ENCODE measurements at regions of chr20 and their contacts with region 1.

Region 1: GRCh38 chr20:19661717-19662636 is 96.1 kb upstream of the RIN2 start:
- DNase-seq: peak; percentile 77
- ATAC-seq: peak; percentile 56
- H3K4me3 ChIP-seq: no peak overlapping the region
- H3K4me3 Mint-ChIP-seq: no peak overlapping the region
- H3K27ac ChIP-seq: no peak overlapping the region
- H3K27ac Mint-ChIP-seq: no peak overlapping the region
- H3K4me1 ChIP-seq: peaks cover 19 to 24% of the 10 kb centered on the region in 2 donors
- H3K4me1 Mint-ChIP-seq: peaks cover 29% of the 10 kb centered on the region
- H3K27me3 ChIP-seq: peaks cover 0 to 16% (median 6%) of the 10 kb centered on the region in 4 experiments
- H3K27me3 Mint-ChIP-seq: peaks cover 32% of the 10 kb centered on the region
- CTCF ChIP-seq: peak; percentile 99

Region 2: DNA sequence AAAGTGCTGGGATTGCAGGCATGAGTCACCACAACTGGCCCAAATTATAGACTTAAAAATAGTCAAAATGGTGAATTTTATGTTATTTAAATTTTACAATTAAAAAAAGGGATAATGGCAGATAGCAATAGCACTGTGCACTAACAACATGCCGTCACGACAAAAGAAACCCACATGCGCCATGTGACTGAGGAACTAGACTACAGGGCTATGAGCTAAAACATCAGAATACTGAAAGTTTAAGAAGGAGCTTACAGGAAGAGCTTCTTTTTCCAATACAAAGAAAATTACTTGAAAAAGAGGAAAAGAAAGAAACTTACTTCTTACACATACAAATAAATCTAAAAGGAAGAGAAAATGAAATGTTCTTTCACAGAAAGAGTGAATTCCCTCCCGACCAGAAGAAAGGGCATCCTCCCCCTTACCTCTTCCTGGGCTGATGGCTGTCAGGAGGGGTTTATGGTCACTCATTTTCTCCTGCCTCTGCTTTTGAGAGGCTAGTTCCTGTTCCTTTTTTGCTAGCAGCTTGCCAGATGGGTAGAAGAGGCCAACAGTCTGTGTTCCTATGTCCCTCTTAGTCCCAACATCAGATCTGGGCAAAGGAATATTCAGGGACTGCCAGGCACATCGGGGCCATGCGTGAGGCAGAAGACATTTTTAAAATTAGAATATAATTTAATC is 1249.6 kb before region 1 on chr20:
- CTCF ChIA-PET with region 1: interaction called, 6 read pairs
- POLR2A ChIA-PET with region 1: no interaction called
- intact Hi-C with region 1: loop called (anchors 1 kb)
- DNase-seq: peak; percentile 52
- ATAC-seq: peak; percentile 20
- H3K4me3 ChIP-seq: peak overlapping the region in 1 of 5 experiments; percentile 25
- H3K4me3 Mint-ChIP-seq: peak overlapping the region; percentile 63
- H3K27ac ChIP-seq: peak overlapping the region; percentile 65 to 70
- H3K27ac Mint-ChIP-seq: peak overlapping the region; percentile 70
- H3K4me1 ChIP-seq: peaks cover 7 to 15% of the 10 kb centered on the region in 2 donors
- H3K4me1 Mint-ChIP-seq: peaks cover 11% of the 10 kb centered on the region
- H3K27me3 ChIP-seq: no peaks in the 10 kb centered on the region
- H3K27me3 Mint-ChIP-seq: no peaks in the 10 kb centered on the region
- CTCF ChIP-seq: no peak

Region 3: DNA sequence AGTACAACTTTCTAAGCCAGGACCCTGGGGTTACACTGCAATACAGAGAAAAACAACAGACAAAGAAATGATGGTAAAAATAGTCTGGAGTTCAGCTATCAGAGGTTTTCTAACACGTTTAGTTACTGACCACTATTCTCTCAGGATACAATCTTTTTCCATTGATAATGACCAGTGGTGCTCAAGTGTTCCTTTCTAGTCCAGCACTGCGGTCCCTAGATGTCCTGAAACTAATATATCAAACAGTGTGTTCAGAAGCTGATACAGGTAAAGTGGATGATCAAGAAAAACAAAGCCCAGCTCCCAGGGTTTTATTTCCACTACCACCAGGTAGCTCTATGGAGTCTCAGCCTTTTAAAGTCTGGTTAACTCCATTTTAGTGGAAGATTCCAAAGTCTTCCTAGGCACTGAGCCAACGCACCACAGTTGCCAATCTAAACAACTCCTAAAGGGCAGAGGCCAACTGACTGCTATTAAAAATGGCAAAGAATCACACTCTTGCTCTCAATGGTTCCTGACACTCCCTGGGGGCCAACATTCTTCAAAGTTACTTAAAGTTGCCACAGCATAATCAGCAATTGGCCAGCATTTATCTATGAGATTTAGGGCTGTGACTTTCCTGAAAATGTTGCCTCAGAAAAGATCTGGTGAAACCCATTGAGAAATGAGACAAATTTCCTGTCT is 1233.3 kb before region 1 on chr20:
- CTCF ChIA-PET with region 1: no interaction called
- POLR2A ChIA-PET with region 1: no interaction called
- intact Hi-C with region 1: no loop called
- DNase-seq: no peak
- ATAC-seq: no peak
- H3K4me3 ChIP-seq: no peak overlapping the region
- H3K4me3 Mint-ChIP-seq: no peak overlapping the region
- H3K27ac ChIP-seq: no peak overlapping the region
- H3K27ac Mint-ChIP-seq: no peak overlapping the region
- H3K4me1 ChIP-seq: no peaks in the 10 kb centered on the region
- H3K4me1 Mint-ChIP-seq: no peaks in the 10 kb centered on the region
- H3K27me3 ChIP-seq: no peaks in the 10 kb centered on the region
- H3K27me3 Mint-ChIP-seq: no peaks in the 10 kb centered on the region
- CTCF ChIP-seq: no peak

Region 4: DNA sequence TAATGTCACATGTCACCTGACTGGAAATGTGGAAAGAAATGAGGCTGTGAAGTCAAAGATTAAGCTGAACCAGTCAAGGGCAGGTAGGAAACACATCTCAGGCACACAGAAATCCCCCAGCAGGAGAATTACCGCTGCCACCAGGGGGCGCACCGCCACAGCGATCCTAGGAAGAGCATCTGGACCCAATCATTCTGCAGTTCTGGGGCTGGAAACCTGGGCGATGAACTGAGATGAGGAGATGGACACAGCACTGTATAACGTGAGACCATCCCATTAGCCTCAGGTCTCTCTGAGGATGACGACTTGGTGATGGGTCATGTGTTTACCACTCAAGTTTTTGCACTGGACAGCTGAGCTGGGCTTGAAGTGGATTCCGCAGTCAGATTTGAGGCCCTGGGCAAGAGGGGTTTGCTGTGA is 456.0 kb before region 1 on chr20:
- CTCF ChIA-PET with region 1: interaction called, 93 read pairs
- POLR2A ChIA-PET with region 1: no interaction called
- intact Hi-C with region 1: no loop called
- DNase-seq: peak; percentile 65
- ATAC-seq: no peak
- H3K4me3 ChIP-seq: no peak overlapping the region
- H3K4me3 Mint-ChIP-seq: no peak overlapping the region
- H3K27ac ChIP-seq: no peak overlapping the region
- H3K27ac Mint-ChIP-seq: no peak overlapping the region
- H3K4me1 ChIP-seq: no peaks in the 10 kb centered on the region
- H3K4me1 Mint-ChIP-seq: no peaks in the 10 kb centered on the region
- H3K27me3 ChIP-seq: peaks cover 0 to 19% (median 17%) of the 10 kb centered on the region in 4 experiments
- H3K27me3 Mint-ChIP-seq: peaks cover 54% of the 10 kb centered on the region
- CTCF ChIP-seq: peak; percentile 95

Region 5: DNA sequence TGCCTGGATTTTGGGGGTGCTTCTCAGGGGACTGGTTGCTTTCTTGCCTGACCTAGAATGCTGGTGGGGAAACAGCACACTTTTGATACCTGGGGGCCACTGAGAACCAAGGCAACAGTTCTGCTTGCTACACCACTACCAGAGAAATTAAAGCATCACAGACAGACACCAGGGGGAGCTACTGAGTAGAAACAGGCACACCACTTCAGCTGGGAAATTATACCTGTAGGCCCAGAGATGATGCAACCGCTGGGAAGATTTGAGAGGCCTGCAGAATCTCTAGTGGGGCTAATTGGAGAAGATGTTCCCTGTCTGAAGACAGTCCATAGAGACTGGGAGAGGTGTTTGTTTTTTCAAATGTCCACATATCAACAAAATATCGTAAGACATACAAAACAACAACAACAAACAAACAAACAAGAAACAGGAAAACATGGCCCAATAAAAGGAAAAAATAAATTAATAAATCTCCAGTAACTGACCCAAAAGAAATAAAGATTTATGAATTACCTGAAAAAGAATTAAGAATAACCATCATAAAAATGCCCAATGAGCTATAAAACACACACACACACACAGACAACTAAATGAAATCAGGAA is 33.3 kb before region 1 on chr20:
- CTCF ChIA-PET with region 1: interaction called, 295 read pairs
- POLR2A ChIA-PET with region 1: interaction called, 3 read pairs
- intact Hi-C with region 1: loop called (anchors 1 kb)
- DNase-seq: peak; percentile 77
- ATAC-seq: peak; percentile 47
- H3K4me3 ChIP-seq: no peak overlapping the region
- H3K4me3 Mint-ChIP-seq: no peak overlapping the region
- H3K27ac ChIP-seq: no peak overlapping the region
- H3K27ac Mint-ChIP-seq: no peak overlapping the region
- H3K4me1 ChIP-seq: no peaks in the 10 kb centered on the region
- H3K4me1 Mint-ChIP-seq: no peaks in the 10 kb centered on the region
- H3K27me3 ChIP-seq: no peaks in the 10 kb centered on the region
- H3K27me3 Mint-ChIP-seq: peaks cover 23% of the 10 kb centered on the region
- CTCF ChIP-seq: peak; percentile 84

Region 6: DNA sequence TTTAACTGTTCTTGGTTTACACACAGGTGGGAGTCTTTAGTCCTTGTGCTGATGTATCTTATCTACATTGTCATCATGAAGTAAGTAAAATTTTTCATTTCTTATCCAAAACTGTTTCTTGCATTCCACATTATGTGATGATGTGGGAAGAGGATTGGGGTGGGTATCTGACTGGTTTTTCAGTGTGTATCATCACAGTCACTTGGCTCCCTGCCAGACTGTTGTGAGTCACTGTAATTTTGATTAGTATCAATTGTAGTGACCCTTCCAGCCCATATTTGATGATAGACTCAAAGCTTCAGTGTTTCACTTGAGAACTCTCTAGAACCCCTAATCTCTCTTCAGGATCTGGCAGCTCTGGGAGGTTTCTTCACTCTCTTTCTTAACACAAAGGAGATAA is 11.6 kb after region 1 on chr20:
- CTCF ChIA-PET with region 1: interaction called, 16 read pairs
- POLR2A ChIA-PET with region 1: no interaction called
- intact Hi-C with region 1: no loop called
- DNase-seq: no peak
- ATAC-seq: no peak
- H3K4me3 ChIP-seq: no peak overlapping the region
- H3K4me3 Mint-ChIP-seq: no peak overlapping the region
- H3K27ac ChIP-seq: no peak overlapping the region
- H3K27ac Mint-ChIP-seq: no peak overlapping the region
- H3K4me1 ChIP-seq: peaks cover 10 to 12% of the 10 kb centered on the region in 2 donors
- H3K4me1 Mint-ChIP-seq: peaks cover 12% of the 10 kb centered on the region
- H3K27me3 ChIP-seq: peaks cover 0 to 21% (median 9%) of the 10 kb centered on the region in 4 experiments
- H3K27me3 Mint-ChIP-seq: peaks cover 18% of the 10 kb centered on the region
- CTCF ChIP-seq: no peak

Measured in B cell (primary cell).